ENCODE measurements at regions of chr4 and their contacts with region 1.

Region 1: DNA sequence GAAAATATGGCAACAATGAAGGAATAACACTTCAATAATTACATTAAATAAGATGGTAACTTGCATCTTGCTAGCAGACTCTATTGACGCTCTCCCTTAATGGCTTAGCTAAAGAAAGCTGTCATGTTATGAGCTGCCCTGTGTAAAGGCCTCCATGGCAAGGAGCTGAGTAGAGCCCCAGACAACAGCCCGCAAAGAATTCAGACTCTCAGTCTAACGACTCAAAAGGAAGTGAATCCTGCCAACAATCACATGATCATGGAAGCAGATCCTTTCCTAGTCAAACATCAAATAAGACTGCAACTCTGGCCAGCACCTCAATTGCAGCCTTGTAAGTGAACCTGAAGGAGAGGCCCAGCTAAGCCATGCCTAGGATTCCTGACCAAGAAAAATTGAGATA is 157.6 kb downstream of the MAB21L2 start:
- DNase-seq: peak; percentile 52
- H3K4me3 ChIP-seq: no peak overlapping the region
- H3K27ac ChIP-seq: no peak overlapping the region
- H3K4me1 ChIP-seq: peaks cover 5% of the 10 kb centered on the region
- H3K27me3 ChIP-seq: no peaks in the 10 kb centered on the region
- CTCF ChIP-seq: no peak
- POLR2A ChIP-seq: no peak

Region 2: DNA sequence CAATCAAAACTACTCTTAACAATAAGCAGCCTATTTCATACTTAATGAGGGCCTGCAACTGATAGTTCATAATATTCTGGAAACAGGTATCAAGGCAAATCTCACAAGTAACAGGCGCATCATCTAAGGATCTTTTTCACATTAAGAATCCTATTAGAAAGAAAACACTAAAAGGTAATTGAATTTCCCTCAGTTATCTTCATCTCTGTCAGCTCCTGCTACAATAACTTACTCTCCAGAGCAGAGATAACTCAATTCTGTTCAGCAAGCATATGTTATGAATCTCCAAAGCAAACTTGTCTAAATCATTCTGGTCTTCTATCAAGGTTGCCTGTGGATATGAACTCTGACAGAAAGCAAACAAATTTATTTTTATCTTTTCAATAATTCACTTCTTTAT is 31.6 kb before region 1 on chr4:
- CTCF ChIA-PET with region 1: no interaction called
- POLR2A ChIA-PET with region 1: no interaction called
- dilution Hi-C with region 1: no loop called
- intact Hi-C with region 1: no loop called
- DNase-seq: no peak
- H3K4me3 ChIP-seq: no peak overlapping the region
- H3K27ac ChIP-seq: no peak overlapping the region
- H3K4me1 ChIP-seq: no peaks in the 10 kb centered on the region
- H3K27me3 ChIP-seq: no peaks in the 10 kb centered on the region
- CTCF ChIP-seq: no peak
- POLR2A ChIP-seq: no peak

Region 3: GRCh38 chr4:150722908-150723362 is 16.7 kb before region 1 on chr4:
- CTCF ChIA-PET with region 1: interaction called, 10 read pairs
- POLR2A ChIA-PET with region 1: no interaction called
- dilution Hi-C with region 1: no loop called
- intact Hi-C with region 1: no loop called
- DNase-seq: peak; percentile 45
- H3K4me3 ChIP-seq: no peak overlapping the region
- H3K27ac ChIP-seq: no peak overlapping the region
- H3K4me1 ChIP-seq: no peaks in the 10 kb centered on the region
- H3K27me3 ChIP-seq: no peaks in the 10 kb centered on the region
- CTCF ChIP-seq: no peak
- POLR2A ChIP-seq: no peak